Activated T-helper 1 cell treated with anti-CD3 and anti-CD28 coated beads, Interleukin-12 subunit alpha, Interleukin-12 subunit beta, Interleukin-2, Interleukin-4 antibody, amounts not matched to agents 30 ng/mL and 10 ng/mL and 1 ng/mL, durations not matched to agents 14 hours and 24 hours and 36 hours (primary cell): ENCODE measurements at regions of chr22 and their contacts with region 1.

Region 1: DNA sequence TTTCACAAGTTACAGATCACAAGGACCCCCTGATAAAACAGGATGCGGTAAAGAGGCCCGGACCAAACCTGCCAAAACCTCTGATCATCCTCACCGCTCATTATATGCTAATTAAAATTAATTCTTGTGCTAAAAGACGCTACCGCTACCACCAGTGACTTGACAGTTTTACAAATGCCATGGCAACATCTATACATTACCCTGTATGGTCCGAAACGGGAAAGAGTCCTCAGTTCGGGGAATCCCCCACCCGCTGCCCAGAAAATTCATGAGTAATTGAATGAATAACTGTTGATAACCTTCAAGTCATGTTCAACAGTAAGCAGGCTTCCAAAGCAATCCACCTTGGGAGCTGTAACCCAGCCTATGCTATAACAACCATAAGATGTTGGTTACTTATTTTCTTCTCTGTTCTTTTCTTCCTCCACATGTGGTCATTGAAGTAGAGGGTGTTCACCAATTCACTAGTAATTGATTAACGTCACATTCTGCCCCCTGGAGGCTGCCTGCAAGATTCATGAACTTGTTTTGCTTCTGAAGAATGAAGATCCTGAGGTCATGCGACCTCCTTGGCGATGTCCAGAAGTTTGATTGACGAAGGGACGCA is 20.6 kb downstream of the APOBEC3H start:
- DNase-seq: peak; percentile 53
- H3K4me3 Mint-ChIP-seq: peak overlapping the region; percentile 45
- H3K27ac Mint-ChIP-seq: peak overlapping the region; percentile 86
- H3K4me1 Mint-ChIP-seq: peaks cover 61% of the 10 kb centered on the region
- H3K27me3 Mint-ChIP-seq: no peaks in the 10 kb centered on the region

Region 2: DNA sequence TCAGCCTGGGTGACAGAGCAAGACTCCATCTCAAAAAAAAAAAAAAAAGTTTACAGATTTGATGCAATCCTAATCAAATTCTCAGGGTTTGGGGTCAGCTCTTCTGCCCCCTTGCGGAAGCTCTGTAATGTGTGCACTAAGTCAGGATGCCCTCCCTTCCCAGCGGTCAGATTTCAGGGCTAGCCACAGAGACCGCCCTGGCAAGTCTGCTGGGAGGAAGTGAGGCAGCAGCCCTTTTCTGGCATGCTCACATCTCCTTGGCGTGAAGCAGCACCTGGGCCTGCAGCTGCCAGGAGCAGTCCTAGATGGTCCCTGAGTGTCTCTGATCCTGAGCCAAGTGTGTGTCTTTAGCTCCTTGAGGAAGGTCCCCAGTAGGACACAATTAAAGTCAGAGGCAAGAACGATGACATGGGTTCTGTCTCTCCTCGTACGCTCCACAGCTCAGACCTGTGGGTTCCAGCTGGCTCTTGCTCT is 114.5 kb before region 1 on chr22:
- intact Hi-C with region 1: loop called (anchors 1 kb)
- DNase-seq: peak; percentile 68
- H3K4me3 Mint-ChIP-seq: no peak overlapping the region
- H3K27ac Mint-ChIP-seq: no peak overlapping the region
- H3K4me1 Mint-ChIP-seq: peaks cover 8% of the 10 kb centered on the region
- H3K27me3 Mint-ChIP-seq: peaks cover 18% of the 10 kb centered on the region

Region 3: GRCh38 chr22:39068033-39068791 is 49.5 kb before region 1 on chr22:
- intact Hi-C with region 1: loop called (anchors 2 kb)
- DNase-seq: no peak
- H3K4me3 Mint-ChIP-seq: no peak overlapping the region
- H3K27ac Mint-ChIP-seq: no peak overlapping the region
- H3K4me1 Mint-ChIP-seq: peaks cover 5% of the 10 kb centered on the region
- H3K27me3 Mint-ChIP-seq: no peaks in the 10 kb centered on the region

Region 4: GRCh38 chr22:39090426-39091064 is 27.1 kb before region 1 on chr22:
- intact Hi-C with region 1: loop called (anchors 1 kb)
- DNase-seq: peak; percentile 81
- H3K4me3 Mint-ChIP-seq: peak overlapping the region; percentile 75
- H3K27ac Mint-ChIP-seq: peak overlapping the region; percentile 94
- H3K4me1 Mint-ChIP-seq: peaks cover 80% of the 10 kb centered on the region
- H3K27me3 Mint-ChIP-seq: no peaks in the 10 kb centered on the region